AG04449 (cell line): ENCODE measurements at regions of chr9 and their contacts with region 1.

Region 1: GRCh38 chr9:95025213-95026147 is 292.0 kb downstream of the FANCC start:
- DNase-seq: peak; percentile 88
- H3K4me3 ChIP-seq: no peak overlapping the region
- CTCF ChIP-seq: peak; percentile 47

Region 2: GRCh38 chr9:94980947-94981722 is 44.3 kb before region 1 on chr9:
- CTCF ChIA-PET with region 1: no interaction called
- POLR2A ChIA-PET with region 1: no interaction called
- DNase-seq: no peak
- H3K4me3 ChIP-seq: no peak overlapping the region
- CTCF ChIP-seq: no peak

Region 3: DNA sequence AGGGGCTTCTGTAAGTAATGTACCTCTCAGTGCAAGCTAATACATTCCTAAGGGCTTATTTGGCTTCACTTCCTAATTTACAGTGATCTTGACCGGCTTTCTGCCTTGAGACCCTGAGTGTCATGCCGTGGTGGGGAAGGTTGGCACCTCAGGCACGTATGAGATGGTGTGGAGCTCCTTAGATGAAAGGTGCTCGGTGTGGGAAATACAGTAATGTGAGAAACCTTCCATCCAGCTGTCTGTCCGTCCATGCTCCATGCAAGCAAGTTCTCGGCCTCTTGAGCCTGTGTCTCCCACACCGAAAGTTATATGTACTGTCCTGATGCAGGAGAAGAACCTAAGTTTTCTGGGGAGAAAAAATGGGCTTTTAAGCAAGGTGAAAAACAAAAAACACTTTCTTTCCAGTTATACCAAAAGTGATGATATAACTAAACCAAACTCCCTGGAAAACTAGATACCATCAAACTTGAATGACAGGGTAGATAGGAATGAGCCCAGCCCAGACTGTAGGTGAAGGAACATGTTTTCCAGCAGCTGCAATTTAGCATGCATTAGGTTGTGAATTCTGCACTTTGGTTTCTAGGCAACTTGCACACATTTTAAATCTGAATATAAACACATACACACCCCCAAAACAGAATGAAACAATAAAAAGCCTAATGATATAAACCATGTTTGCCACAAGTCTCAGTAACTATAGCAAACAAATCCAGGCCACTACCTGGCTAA is 12.5 kb after region 1 on chr9:
- CTCF ChIA-PET with region 1: interaction called, 14 read pairs
- POLR2A ChIA-PET with region 1: interaction called, 3 read pairs
- DNase-seq: no peak
- H3K4me3 ChIP-seq: no peak overlapping the region
- CTCF ChIP-seq: no peak

Region 4: DNA sequence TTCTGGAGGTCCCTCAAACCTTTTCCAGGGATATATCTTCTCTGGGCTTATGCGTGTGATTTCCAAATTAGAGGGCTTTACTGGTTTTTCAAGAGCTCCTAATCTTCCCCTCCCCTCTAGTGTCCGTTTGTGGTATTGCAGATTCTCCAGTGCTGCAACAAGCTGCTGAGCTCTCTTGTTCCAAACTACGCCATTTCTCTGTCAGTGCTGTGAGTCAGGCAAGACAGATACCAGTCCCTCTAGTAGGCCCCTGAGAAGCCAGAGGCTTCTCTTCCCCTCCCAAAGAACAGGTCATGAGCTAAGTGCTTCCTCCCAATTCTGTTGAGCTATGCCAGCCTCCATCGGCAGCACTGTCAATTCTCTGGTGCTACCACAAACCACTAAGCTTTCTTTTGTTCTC is 142.5 kb after region 1 on chr9:
- CTCF ChIA-PET with region 1: no interaction called
- POLR2A ChIA-PET with region 1: no interaction called
- DNase-seq: peak; percentile 78
- H3K4me3 ChIP-seq: no peak overlapping the region
- CTCF ChIP-seq: peak; percentile 77